BJ (cell line): ENCODE measurements at regions of chr2 and their contacts with region 1.

Region 1: DNA sequence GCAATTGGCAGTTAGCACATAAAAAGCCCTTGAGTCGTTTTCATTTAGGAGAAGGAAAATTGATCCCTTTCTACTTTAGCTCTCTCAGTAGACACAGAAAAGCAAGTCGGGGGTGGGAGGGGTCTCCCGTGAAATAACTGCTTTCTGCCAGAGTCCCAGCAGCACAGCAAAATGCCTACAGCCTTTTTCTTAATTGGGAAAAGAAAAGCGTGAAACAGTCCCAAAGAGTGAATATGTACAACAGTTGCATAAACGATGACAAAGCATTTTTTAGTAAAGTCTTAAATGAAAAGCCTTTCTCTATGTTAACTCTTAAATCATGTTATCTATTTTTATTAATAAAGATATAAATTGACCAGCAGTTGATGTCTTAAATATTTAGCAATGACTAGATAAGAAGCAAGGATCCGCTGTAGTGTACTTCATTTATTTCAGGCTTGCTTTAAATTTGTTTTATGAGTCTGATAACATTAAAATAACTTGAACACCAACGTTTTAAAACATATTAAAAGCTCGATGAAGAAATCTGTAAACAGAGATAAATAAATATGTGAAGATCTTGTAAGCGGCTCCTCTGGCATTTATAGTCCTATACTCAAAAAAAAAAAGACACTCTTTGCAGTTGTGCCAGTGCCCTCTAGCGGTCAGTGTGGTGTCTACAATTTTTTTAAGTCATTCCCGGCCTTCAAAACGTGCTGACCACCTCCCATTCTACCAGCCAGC is 42.3 kb upstream of the ATIC start:
- DNase-seq: peak; percentile 32
- H3K4me3 ChIP-seq: no peak overlapping the region
- H3K27me3 ChIP-seq: no peaks in the 10 kb centered on the region
- CTCF ChIP-seq: peak; percentile 77

Region 2: DNA sequence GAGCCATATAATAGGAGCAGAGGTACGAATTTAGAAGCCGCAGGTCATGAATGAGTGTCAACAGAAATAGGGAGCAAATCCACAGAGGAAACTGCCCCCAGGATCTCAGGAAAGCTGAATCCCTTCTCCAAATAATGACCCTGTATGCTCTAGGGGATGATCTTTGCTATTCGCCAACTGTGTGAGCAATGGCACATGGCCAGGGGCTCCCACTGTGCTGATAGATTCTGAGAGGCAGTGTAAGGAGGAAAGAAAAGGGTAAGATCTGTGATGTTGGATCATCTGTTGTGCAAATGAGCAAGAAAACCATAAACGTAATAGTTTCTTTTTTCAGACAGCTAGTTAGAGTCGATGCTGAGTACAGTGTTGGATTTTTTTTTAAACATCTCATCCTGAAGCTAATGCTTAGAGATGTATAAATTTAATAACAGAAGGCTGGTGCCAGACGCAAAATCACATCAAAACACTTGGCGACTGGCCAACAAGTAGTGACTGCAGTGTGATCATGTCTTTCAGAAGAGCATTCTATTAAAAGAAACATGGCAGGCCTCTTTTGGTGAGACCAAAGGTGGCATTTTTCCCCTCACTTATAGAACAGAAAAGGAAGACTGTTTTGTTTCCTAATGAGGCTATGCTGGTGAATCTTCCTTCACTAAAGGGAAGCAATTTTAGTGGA is 208.6 kb before region 1 on chr2:
- CTCF ChIA-PET with region 1: no interaction called
- POLR2A ChIA-PET with region 1: no interaction called
- DNase-seq: no peak
- H3K4me3 ChIP-seq: no peak overlapping the region
- H3K27me3 ChIP-seq: no peaks in the 10 kb centered on the region
- CTCF ChIP-seq: no peak

Region 3: DNA sequence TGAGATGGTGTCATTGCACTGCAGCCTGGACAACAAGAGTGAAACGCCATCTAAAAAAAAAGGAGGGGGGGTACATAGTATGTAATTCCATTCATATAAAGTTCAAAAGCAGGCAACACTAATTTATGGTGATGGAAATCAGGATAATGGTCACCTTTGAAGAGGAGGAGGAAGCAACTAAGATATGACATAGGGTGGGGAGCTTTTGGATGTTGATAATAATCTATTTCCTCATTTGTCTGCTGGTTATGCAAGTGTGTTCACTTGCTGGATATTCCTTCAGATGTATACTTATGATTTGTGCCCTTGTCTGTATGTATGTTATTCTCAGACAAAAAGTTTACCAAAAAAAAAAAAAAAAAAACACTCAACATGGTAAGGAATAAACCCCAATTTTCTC is 13.7 kb after region 1 on chr2:
- CTCF ChIA-PET with region 1: interaction called, 14 read pairs
- POLR2A ChIA-PET with region 1: no interaction called
- DNase-seq: no peak
- H3K4me3 ChIP-seq: no peak overlapping the region
- H3K27me3 ChIP-seq: no peaks in the 10 kb centered on the region
- CTCF ChIP-seq: no peak